ENCODE measurements at regions of chr11 and their contacts with region 1.

Region 1: GRCh38 chr11:19628018-19628417 is 84.6 kb upstream of the NAV2 start:
- DNase-seq: peak; percentile 58 to 96
- H3K4me3 ChIP-seq: no peak overlapping the region
- H3K27ac ChIP-seq: peak overlapping the region; percentile 84 to 87
- H3K4me1 ChIP-seq: peaks cover 12 to 46% of the 10 kb centered on the region in 2 donors
- H3K27me3 ChIP-seq: no peaks in the 10 kb centered on the region
- CTCF ChIP-seq: no peak

Region 2: DNA sequence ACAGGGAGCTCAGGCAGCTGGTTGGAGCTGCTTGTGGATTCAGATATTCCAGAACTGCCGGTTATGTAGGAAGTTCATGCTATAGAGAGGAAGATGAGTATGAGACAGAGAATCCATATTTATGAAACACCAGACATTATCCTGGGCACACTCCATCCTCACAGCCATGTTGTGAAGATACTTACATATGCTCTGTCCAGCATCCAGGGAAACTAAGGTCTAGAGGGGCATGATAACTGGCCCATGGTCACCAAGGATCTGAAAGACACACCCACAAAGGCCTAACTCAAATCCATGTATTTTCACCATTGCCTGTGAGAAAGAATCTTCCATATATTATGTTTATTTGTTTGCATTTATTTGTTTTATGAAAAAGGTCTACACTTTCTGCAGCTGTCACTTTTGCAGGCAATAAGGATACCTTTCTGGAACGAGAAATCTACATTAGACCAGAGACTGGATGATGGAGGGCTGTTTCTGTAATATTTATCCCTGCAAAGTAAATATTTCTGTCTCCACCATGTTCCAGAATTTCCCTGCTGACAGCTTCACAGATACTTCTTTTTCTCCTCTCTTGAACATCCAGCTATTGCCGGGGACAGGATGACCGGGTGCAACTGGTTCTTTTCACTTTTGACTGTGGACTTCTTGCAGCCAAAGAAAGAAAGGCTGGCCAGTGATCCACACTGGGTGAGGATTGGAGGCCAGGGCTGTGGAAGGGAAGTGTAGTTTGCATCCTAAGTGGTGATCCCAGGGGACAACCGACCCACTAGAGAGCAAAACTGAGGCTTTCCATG is 61.2 kb before region 1 on chr11:
- intact Hi-C with region 1: loop called (anchors 5 kb)
- DNase-seq: peak in 1 of 2 donors; percentile 33
- H3K4me3 ChIP-seq: no peak overlapping the region
- H3K27ac ChIP-seq: no peak overlapping the region
- H3K4me1 ChIP-seq: peaks cover 0 to 8% of the 10 kb centered on the region in 2 donors
- H3K27me3 ChIP-seq: no peaks in the 10 kb centered on the region
- CTCF ChIP-seq: no peak